Left cardiac atrium (tissue), 4 donors: ENCODE measurements at regions of chr6 and their contacts with region 1.

Region 1: DNA sequence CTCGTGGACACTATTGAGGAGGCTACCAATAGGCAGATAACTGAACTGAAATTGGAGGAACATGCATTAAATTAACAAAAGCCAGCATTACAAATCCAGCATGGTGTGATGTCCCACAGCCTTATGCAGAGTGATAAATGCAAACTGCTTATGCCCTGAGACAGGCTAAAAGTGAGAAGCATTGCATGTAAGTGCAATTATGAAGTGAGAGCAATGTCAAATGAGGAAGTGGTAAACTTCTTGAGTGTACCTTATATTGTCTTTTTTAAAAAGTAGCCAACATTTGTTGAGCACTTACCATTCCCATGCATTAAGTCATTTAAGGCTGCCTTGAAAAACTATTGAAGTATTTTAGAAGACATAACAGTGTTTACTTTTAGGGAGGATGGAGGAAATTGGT is 212.2 kb downstream of the TBC1D7 start:
- DNase-seq: no peak
- ATAC-seq: no peak

Region 2: DNA sequence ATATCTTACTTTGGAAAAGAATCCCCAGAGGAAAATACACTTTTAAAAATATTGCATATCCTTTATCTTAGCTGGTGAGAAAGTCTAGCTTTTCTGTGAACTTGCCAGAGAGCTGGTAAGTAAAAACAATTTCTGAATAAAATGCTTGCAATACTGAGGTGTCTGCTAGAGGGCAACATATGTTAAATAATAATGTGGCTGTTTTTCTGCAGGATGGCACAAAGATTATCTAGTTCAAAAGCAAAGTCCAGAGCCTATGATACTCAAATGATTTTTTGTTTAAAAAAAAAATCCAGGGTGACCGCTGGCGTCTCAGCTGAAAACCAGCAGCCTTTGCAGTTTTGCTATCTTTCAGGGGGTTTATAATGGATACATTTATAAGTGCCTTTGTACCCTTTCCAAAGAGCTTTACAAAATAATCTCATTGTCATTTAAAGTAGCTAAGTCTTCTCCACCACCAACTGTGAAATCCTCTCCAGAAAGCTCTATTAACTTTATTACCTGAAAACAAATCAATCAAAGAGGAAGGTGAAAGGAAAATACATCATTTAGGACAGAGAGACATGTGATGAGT is 204.7 kb before region 1 on chr6:
- intact Hi-C with region 1: loop called in 1 of 2 experiments (anchors 5 kb)
- DNase-seq: no peak
- ATAC-seq: no peak